Activated T-helper 2 cell treated with anti-CD3 and anti-CD28 coated beads, Interferon-gamma antibody, Interleukin-2, Interleukin-4, amounts not matched to agents 10 μg/mL and 5 μg/mL and 100 μg/mL, durations not matched to agents 14 hours and 24 hours and 36 hours (primary cell): ENCODE measurements at regions of chrX and their contacts with region 1.

Region 1: GRCh38 chrX:20066968-20067708 is 49.6 kb downstream of the MAP7D2 start:
- DNase-seq: no peak
- H3K4me3 Mint-ChIP-seq: no peak overlapping the region
- H3K27ac Mint-ChIP-seq: no peak overlapping the region
- H3K4me1 Mint-ChIP-seq: peaks cover 1% of the 10 kb centered on the region
- H3K27me3 Mint-ChIP-seq: no peaks in the 10 kb centered on the region

Region 2: DNA sequence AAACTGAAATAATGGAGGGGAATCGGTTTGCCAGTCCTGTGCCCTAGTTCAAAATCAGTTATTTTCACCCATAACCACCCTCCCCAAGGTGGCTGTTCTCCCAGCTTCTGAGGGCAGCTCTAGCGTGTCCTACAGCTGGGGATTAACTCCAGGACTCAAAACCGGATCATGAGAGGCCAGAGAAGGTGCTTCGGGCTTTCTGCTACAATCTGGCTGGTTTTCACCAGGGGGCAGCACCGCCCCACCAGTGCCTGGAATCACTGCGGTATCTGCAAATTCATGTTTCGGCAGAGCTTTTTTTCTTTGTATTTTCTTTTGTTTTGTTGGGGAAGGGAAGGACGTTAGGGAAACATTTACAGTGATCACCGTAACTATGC is 695.0 kb before region 1 on chrX:
- intact Hi-C with region 1: loop called (anchors 1 kb)
- DNase-seq: peak; percentile 41
- H3K4me3 Mint-ChIP-seq: peak overlapping the region; percentile 62
- H3K27ac Mint-ChIP-seq: no peak overlapping the region
- H3K4me1 Mint-ChIP-seq: peaks cover 5% of the 10 kb centered on the region
- H3K27me3 Mint-ChIP-seq: no peaks in the 10 kb centered on the region

Region 3: GRCh38 chrX:19904778-19905367 is 162.3 kb before region 1 on chrX:
- intact Hi-C with region 1: loop called (anchors 1 kb)
- DNase-seq: no peak
- H3K4me3 Mint-ChIP-seq: no peak overlapping the region
- H3K27ac Mint-ChIP-seq: no peak overlapping the region
- H3K4me1 Mint-ChIP-seq: peaks cover 14% of the 10 kb centered on the region
- H3K27me3 Mint-ChIP-seq: no peaks in the 10 kb centered on the region